HCT116 (cell line): ENCODE measurements at regions of chr11 and their contacts with region 1.

Region 1: GRCh38 chr11:88543902-88544655 is 206.5 kb upstream of the CTSC start:
- DNase-seq: peak; percentile 81
- ATAC-seq: peak; percentile 100
- H3K4me3 ChIP-seq: no peak overlapping the region
- H3K27ac ChIP-seq: no peak overlapping the region
- H3K4me1 ChIP-seq: peaks cover 0 to 2% of the 10 kb centered on the region in 2 experiments; a peak in 1 of 4 replicates
- H3K27me3 ChIP-seq: no peaks in the 10 kb centered on the region
- CTCF ChIP-seq: peak; percentile 93 to 99 (median 98)
- POLR2A ChIP-seq: no peak
- RAD21 ChIP-seq: peak; percentile 100

Region 2: GRCh38 chr11:87352759-87353707 is 1191.0 kb before region 1 on chr11:
- CTCF ChIA-PET with region 1: no interaction called
- POLR2A ChIA-PET with region 1: no interaction called
- RAD21 ChIA-PET with region 1: no interaction called
- intact Hi-C with region 1: loop called (anchors 5 kb)
- DNase-seq: peak; percentile 57
- ATAC-seq: peak; percentile 100
- H3K4me3 ChIP-seq: no peak overlapping the region
- H3K27ac ChIP-seq: no peak overlapping the region
- H3K4me1 ChIP-seq: peaks cover 0 to 7% of the 10 kb centered on the region in 2 experiments; a peak in 1 of 4 replicates
- H3K27me3 ChIP-seq: no peaks in the 10 kb centered on the region
- CTCF ChIP-seq: peak; percentile 69 to 98 (median 95)
- POLR2A ChIP-seq: no peak
- RAD21 ChIP-seq: peak; percentile 95

Region 3: DNA sequence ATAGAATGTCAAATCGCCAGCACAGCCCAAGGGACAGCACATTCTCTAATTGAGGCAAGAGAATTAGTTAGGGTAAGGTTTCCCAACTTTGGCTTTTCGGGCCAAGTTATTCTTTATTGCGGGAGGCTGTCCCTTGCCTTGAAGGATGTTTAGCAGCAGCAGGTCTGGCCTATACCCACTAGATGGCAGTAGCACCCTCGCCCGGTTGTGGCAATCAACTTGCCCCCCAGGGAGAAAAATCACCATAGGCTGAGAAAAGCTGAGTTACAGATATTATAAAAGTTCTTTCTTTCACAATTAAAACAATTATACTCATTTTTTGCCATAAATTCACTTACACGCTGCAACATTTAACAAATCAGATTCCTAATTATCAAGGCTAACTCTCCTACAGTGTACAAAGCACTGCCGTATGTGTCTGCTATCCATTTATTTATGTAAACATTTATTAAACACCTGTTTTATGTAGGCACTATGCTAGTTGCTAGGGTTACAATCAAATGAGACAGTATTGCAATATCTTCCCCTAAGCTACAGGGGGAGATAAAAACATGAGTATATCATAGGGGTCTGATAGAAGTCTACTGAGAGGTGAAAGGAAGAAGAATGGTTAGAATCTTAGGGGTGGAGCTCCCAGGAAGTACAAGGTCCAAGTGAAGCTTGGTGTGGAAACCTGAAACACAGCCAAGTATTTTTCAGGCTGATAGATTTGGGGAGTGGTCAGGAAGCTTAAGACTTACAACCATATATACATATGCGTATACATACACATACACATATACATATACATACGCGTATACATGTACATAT is 821.1 kb before region 1 on chr11:
- CTCF ChIA-PET with region 1: no interaction called
- POLR2A ChIA-PET with region 1: no interaction called
- RAD21 ChIA-PET with region 1: no interaction called
- intact Hi-C with region 1: loop called (anchors 2 kb)
- DNase-seq: no peak
- ATAC-seq: peak; percentile 79
- H3K4me3 ChIP-seq: no peak overlapping the region
- H3K27ac ChIP-seq: no peak overlapping the region
- H3K4me1 ChIP-seq: no peaks in the 10 kb centered on the region
- H3K27me3 ChIP-seq: 0 out of 2 replicates have a peak, but pooled peaks cover 2% of the 10 kb centered on the region
- CTCF ChIP-seq: peak; percentile 33 to 86 (median 80); a peak in 5 of 6 replicates
- POLR2A ChIP-seq: no peak
- RAD21 ChIP-seq: peak; percentile 45

Region 4: DNA sequence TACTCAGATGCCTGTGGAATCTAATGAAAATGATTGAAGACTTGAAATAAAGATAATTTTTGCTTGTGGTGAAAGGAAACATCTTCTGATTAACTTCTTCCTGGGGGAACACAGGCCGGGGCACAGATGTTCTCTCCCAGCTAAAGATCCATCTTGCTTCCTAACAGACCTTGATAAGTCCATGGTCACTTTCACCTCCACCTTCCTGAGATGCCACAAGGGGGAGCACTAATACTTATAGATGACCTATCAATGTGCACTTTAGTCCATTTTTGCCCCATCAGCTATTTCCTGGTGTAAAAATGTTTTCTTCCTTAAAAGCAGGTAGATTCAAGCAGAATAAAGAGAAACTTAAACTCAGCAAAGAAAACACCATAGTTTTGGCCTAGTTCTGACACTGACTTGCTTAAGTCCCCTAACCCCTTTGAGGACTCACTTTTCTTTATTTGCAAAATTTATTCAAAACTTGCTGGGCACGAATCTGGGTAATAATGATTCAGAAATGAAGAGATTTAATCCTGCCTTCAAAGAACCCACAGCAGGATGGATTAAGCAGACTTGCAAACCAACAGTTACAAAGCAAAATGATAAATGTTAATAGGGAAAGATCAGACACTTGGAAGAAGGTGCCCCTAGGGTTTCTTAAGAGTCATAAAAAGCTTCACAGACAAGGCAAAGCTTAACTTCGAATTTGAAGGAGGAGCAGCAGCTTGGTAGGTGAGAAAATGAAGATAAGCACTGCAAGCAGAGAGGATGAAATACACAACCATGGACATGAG is 527.5 kb before region 1 on chr11:
- CTCF ChIA-PET with region 1: interaction called, 53 read pairs
- POLR2A ChIA-PET with region 1: interaction called, 3 read pairs
- RAD21 ChIA-PET with region 1: interaction called, 5 to 6 read pairs
- intact Hi-C with region 1: loop called (anchors 1 kb)
- DNase-seq: peak; percentile 78
- ATAC-seq: peak; percentile 98
- H3K4me3 ChIP-seq: no peak overlapping the region
- H3K27ac ChIP-seq: no peak overlapping the region
- H3K4me1 ChIP-seq: no peaks in the 10 kb centered on the region
- H3K27me3 ChIP-seq: no peaks in the 10 kb centered on the region
- CTCF ChIP-seq: peak; percentile 72 to 82 (median 82)
- POLR2A ChIP-seq: no peak
- RAD21 ChIP-seq: peak; percentile 92

Region 5: GRCh38 chr11:88231894-88232482 is 312.1 kb before region 1 on chr11:
- CTCF ChIA-PET with region 1: interaction called, 5 read pairs
- POLR2A ChIA-PET with region 1: no interaction called
- RAD21 ChIA-PET with region 1: no interaction called
- intact Hi-C with region 1: loop called (anchors 1 kb)
- DNase-seq: no peak
- ATAC-seq: peak; percentile 86
- H3K4me3 ChIP-seq: no peak overlapping the region
- H3K27ac ChIP-seq: no peak overlapping the region
- H3K4me1 ChIP-seq: no peaks in the 10 kb centered on the region
- H3K27me3 ChIP-seq: no peaks in the 10 kb centered on the region
- CTCF ChIP-seq: peak; percentile 47 to 64 (median 62); a peak in 5 of 6 replicates
- POLR2A ChIP-seq: no peak
- RAD21 ChIP-seq: peak; percentile 42

Region 6: DNA sequence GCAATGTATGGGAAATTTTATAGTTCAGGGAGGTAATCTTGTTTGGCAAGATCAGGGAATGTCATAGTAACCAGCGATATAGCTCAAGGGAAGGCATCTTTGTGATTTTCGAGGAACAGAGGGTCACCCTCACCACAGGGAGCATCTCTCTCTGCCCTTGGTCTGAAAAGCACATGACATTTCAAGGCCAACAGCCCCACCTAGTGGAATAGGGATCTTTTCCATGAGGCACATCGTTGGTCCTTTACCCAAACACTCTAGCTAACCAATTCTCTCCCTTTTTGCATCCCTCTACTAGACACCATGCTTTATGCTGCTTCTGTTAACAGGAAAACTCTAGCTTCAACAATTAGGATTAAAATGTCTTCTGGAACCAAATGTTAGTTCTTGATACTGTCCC is 342.7 kb after region 1 on chr11:
- CTCF ChIA-PET with region 1: no interaction called
- POLR2A ChIA-PET with region 1: no interaction called
- RAD21 ChIA-PET with region 1: no interaction called
- intact Hi-C with region 1: loop called (anchors 2 kb)
- DNase-seq: peak; percentile 55
- ATAC-seq: peak; percentile 94
- H3K4me3 ChIP-seq: no peak overlapping the region
- H3K27ac ChIP-seq: no peak overlapping the region
- H3K4me1 ChIP-seq: no peaks in the 10 kb centered on the region
- H3K27me3 ChIP-seq: no peaks in the 10 kb centered on the region
- CTCF ChIP-seq: peak; percentile 59 to 66 (median 59)
- POLR2A ChIP-seq: no peak
- RAD21 ChIP-seq: peak; percentile 86